SK-N-SH (cell line): ENCODE measurements at regions of chr20 and their contacts with region 1.

Region 1: GRCh38 chr20:10090588-10091166 is 55.9 kb downstream of the ANKEF1 start:
- DNase-seq: peak; percentile 50
- H3K4me3 ChIP-seq: no peak overlapping the region; a peak in 1 of 4 replicates
- H3K27ac ChIP-seq: no peak overlapping the region
- H3K4me1 ChIP-seq: peaks cover 4 to 11% of the 10 kb centered on the region in 2 experiments; a peak in 1 of 4 replicates
- H3K27me3 ChIP-seq: no peaks in the 10 kb centered on the region
- CTCF ChIP-seq: peak; percentile 90
- EP300 ChIP-seq: no peak
- RAD21 ChIP-seq: peak; percentile 88

Region 2: DNA sequence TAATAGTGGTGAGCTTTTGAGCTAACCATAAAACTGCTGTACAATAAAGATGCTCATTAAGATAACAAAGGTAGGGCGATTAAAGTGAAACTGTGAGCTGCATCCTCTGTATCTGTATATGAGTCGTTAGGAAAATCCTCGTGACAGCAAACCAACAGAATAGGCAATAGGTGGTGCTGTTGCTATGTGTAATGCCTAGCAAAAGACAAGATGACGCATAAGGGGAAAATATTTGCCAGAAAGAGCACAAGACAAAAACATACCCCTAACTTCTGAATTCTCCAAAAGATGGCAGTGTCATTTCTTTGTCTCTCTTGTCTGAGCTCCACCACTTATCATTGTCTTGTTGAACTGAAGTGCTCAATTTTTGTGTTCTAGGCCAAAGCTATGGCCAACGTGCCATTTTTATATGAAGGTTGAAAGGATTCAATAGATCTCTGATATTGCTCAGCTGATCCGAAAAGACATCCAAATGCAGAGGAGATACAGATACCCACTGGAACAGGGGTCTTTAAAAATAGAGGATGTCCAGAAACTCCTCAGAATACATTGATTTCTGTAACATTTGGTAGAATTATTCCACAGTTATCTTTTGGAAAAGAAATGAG is 112.2 kb before region 1 on chr20:
- CTCF ChIA-PET with region 1: interaction called, 182 read pairs
- POLR2A ChIA-PET with region 1: no interaction called
- DNase-seq: peak; percentile 66
- H3K4me3 ChIP-seq: peak overlapping the region; percentile 6 to 16; a peak in 2 of 4 replicates
- H3K27ac ChIP-seq: no peak overlapping the region; a peak in 1 of 4 replicates
- H3K4me1 ChIP-seq: no peaks in the 10 kb centered on the region; a peak in 1 of 4 replicates
- H3K27me3 ChIP-seq: no peaks in the 10 kb centered on the region
- CTCF ChIP-seq: peak; percentile 94
- EP300 ChIP-seq: no peak
- RAD21 ChIP-seq: peak; percentile 99

Region 3: DNA sequence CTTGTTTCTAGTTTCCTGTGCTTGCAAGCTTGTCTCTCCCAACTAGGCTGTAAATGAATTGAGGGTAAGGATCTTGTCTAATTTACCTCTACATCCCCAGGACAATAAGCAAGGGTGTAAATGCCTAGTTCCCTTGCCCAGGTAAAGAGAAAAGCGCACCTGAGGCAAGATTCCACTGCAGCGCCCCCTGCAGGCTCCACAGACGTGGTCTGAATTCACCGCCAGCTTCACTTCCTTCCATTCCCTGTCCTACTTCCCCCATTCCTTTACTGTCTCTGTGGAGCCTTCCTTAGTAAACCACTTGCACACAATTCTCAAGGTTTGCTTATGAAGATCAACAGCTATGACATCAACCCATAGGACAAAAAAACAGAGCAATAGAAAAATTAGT is 13.6 kb before region 1 on chr20:
- CTCF ChIA-PET with region 1: interaction called, 45 read pairs
- POLR2A ChIA-PET with region 1: no interaction called
- DNase-seq: no peak
- H3K4me3 ChIP-seq: no peak overlapping the region
- H3K27ac ChIP-seq: no peak overlapping the region
- H3K4me1 ChIP-seq: peaks cover 0 to 21% of the 10 kb centered on the region in 2 experiments; a peak in 1 of 4 replicates
- H3K27me3 ChIP-seq: no peaks in the 10 kb centered on the region
- CTCF ChIP-seq: peak; percentile 56
- EP300 ChIP-seq: no peak
- RAD21 ChIP-seq: no peak

Region 4: DNA sequence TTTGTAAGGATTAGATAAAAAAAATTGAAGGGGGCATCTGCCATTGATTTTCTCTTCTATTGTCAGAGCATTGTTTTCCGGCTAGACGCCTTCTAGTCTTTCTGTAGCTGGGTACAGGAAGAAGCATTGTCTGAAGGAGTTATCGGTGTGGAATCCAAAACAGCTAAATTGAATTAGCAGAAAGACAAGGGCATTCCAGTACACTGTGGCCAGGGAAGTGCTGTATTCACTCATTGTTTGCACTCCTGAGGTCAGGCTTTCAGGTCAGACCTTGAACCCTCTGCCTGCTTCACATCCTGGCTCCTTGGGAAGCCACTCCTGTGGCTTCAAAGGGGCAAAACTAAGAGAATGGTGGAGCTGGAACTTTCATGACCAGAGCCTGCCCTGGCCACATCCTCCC is 46.9 kb after region 1 on chr20:
- CTCF ChIA-PET with region 1: interaction called, 14 read pairs
- POLR2A ChIA-PET with region 1: no interaction called
- DNase-seq: no peak
- H3K4me3 ChIP-seq: no peak overlapping the region
- H3K27ac ChIP-seq: peak overlapping the region in 1 of 2 experiments; percentile 60; a peak in 2 of 4 replicates
- H3K4me1 ChIP-seq: peaks cover 0 to 19% of the 10 kb centered on the region in 2 experiments; a peak in 2 of 4 replicates
- H3K27me3 ChIP-seq: no peaks in the 10 kb centered on the region
- CTCF ChIP-seq: no peak
- EP300 ChIP-seq: no peak
- RAD21 ChIP-seq: no peak

Region 5: GRCh38 chr20:10225439-10226060 is 134.9 kb after region 1 on chr20:
- CTCF ChIA-PET with region 1: interaction called, 17 read pairs
- POLR2A ChIA-PET with region 1: no interaction called
- DNase-seq: peak; percentile 34
- H3K4me3 ChIP-seq: no peak overlapping the region; a peak in 1 of 4 replicates
- H3K27ac ChIP-seq: no peak overlapping the region
- H3K4me1 ChIP-seq: peaks cover 0 to 7% of the 10 kb centered on the region in 2 experiments; a peak in 2 of 4 replicates
- H3K27me3 ChIP-seq: no peaks in the 10 kb centered on the region
- CTCF ChIP-seq: peak; percentile 53
- EP300 ChIP-seq: no peak
- RAD21 ChIP-seq: peak; percentile 55

Region 6: DNA sequence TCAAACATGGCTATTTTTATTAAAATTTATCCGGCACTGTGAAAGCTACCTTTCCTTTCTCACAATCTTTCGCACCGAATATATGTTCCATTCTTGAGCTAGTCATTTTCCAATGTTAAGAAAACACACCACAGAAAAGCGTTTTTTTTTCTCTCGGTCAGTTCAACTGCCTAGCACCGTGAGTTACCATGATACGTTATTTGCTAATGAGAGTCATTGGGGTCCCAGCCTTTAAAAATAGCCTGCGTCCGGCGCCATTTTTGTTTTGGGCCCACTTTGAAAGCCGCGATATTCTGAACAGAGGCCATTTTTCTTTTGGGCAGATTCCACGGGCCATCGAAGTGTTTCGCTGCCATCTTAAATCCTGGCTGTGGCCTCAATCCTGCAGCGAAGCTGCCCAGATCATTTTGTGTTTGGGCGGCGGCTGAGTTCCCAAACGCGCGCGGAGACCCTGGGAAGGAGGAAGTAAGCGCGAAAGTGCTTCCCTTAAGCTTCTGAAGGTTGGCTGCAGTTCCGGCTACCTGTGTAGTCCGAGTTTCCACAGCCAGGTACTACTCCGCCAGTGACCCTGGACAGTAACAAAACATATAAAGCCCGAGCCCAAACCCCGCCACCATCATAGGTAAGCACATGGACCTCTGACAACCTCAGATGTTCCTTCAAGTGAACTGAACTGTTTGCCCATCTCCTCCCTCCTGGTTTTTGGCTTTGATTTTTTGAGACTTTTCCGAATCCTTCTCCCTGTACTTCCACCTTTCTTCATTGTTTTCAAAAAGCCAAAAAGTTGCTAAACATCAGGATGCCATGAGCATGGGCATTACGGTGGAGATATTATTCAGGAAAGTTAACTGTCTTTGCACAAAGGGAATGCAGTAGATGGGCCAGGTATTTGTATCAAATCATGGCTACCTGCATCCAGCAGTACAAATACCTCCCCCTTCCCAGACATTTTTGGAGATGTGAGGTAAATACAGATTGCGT is 344.4 kb after region 1 on chr20 and contains the start of gene SLX4IP:
- CTCF ChIA-PET with region 1: interaction called, 11 read pairs
- POLR2A ChIA-PET with region 1: interaction called, 3 read pairs
- DNase-seq: peak; percentile 75
- H3K4me3 ChIP-seq: peak within 1 kb of the TSS; percentile 93 to 99
- H3K27ac ChIP-seq: peak within 1 kb of the TSS; percentile 93 to 98
- H3K4me1 ChIP-seq: peaks cover 8 to 17% of the 10 kb centered on the region in 2 experiments; a peak in 3 of 4 replicates
- H3K27me3 ChIP-seq: no peaks in the 10 kb centered on the region
- CTCF ChIP-seq: no peak
- EP300 ChIP-seq: no peak; a peak in 1 of 4 replicates
- RAD21 ChIP-seq: no peak
- polyA plus RNA-seq, gene SLX4IP: 1.3 and 1.6 TPM in 2 replicates